Gastrocnemius medialis (tissue), 4 donors: ENCODE measurements at regions of chr5 and their contacts with region 1.

Region 1: DNA sequence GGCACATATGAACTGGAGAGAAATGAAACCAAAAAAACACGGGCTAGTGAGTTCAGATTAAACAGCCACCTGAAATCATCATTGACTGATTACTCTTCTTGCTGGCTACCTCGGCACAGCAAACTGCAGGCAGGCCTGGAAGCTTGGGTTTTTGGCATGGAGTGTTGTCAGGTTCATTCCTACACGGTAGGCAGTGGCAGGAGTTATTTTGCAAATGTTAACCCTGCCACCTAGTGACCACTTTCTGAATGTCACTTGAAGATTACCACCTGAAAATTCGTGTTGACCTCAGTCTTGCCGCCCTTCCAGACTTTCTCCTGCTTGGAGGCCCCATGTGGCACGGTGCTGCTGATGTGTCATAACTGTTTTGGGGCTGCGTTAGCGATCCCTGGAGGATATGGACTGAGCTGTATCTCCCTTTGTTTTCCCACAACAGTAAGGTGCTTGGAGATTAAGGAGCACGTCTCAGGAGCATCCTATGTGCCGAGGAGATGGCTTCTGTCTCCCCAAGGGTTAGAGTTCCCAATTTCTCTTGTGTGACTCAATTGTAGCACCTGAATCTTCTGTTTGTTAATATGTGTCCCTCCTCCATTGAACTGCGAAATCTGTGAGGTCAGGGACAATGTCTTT is 12.7 kb upstream of the CD180 start:
- DNase-seq: peak; percentile 51 to 58
- ATAC-seq: peak; percentile 71 to 93
- H3K4me3 ChIP-seq: no peak overlapping the region
- H3K27ac ChIP-seq: no peak overlapping the region
- H3K4me1 ChIP-seq: no peaks in the 10 kb centered on the region
- H3K27me3 ChIP-seq: no peaks in the 10 kb centered on the region
- CTCF ChIP-seq: peak; percentile 65 to 82 (median 78)
- POLR2A ChIP-seq: no peak

Region 2: DNA sequence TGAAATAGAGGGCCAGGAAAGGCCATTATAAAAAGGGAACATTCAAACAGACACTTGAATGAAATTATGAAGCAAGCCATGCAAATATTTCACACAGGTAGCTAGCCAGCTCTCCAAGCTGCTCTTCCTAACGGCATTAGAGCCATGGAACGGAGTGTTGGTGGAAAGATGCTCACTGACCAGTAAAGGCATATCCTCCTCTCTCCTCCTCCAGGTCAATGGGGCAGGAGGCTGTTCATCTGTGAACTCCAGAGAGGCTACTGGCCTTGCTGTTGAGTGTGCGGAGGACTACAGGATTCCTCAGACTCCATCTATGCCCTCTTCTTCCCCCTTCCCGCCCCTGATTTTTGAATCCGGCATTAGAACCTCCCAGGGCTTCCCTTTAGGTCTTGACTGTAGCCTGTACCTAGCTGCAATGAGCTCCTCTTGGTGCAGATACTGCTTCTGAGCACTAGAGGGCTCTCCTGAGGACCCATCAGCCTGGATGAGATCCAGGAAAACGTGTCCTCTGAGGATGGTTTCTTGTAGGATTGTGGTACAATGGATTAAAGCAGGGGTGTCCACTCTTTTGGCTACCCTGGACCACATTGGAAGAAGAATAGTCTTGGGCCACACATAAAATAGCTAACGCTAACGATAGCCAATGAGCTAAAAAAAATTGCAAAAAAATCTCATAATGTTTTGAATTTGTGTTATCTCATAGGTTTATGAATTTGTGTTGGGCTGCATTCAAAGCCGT is 903.0 kb before region 1 on chr5:
- in situ Hi-C with region 1: loop called in 2 of 4 experiments (anchors 25 kb)
- intact Hi-C with region 1: loop called (anchors 2 kb)
- DNase-seq: peak in 1 of 2 donors; percentile 24
- ATAC-seq: peak; percentile 45 to 68
- H3K4me3 ChIP-seq: no peak overlapping the region
- H3K27ac ChIP-seq: no peak overlapping the region
- H3K4me1 ChIP-seq: peaks cover 0 to 14% of the 10 kb centered on the region in 2 donors
- H3K27me3 ChIP-seq: no peaks in the 10 kb centered on the region
- CTCF ChIP-seq: peak; percentile 24 to 71 (median 56)
- POLR2A ChIP-seq: no peak

Region 3: DNA sequence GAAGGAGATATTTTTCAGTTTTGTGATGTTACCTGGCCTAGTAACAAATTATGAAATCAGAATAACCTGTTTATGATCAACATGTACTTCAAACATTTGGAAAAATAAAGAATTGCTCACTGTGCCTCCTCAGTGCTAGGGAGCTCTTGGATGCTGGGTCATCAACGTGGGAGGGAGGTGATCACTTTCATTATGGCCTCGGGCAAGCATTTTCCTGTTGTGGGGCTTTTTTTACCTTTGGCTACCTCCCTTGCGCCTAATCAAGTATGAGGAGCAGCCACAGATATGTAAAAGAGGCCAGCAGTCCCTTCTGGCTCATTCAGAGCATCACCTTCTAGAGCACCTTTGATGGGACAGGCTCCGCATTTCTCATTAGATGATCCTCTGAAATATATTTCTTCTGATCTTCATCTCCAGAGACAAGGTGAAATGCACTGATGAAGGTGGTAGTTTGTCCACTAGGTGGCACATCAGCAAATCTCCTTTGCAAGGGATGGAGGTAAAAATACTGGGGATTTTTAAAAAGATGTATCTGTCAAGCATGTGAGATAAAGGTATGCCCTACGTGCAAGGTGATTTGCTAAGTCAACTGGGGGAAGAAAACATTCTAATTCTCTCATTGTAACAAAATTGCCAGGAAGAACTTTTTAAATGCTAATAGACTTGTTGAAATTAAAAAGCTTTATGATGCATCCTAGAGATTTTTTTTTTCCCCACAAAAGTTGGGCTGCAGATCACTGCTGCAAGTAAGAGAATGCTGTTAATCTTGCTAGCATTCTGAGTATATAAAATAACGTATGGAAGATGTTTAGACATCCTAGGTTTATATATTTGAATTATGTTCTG is 394.9 kb before region 1 on chr5:
- in situ Hi-C with region 1: loop called in 3 of 4 experiments (anchors 10 kb)
- intact Hi-C with region 1: loop called (anchors 1 kb)
- DNase-seq: no peak
- ATAC-seq: peak in 1 of 2 donors; percentile 33
- H3K4me3 ChIP-seq: no peak overlapping the region
- H3K27ac ChIP-seq: no peak overlapping the region
- H3K4me1 ChIP-seq: no peaks in the 10 kb centered on the region
- H3K27me3 ChIP-seq: no peaks in the 10 kb centered on the region
- CTCF ChIP-seq: peak; percentile 30 to 68 (median 48)
- POLR2A ChIP-seq: no peak

Region 4: DNA sequence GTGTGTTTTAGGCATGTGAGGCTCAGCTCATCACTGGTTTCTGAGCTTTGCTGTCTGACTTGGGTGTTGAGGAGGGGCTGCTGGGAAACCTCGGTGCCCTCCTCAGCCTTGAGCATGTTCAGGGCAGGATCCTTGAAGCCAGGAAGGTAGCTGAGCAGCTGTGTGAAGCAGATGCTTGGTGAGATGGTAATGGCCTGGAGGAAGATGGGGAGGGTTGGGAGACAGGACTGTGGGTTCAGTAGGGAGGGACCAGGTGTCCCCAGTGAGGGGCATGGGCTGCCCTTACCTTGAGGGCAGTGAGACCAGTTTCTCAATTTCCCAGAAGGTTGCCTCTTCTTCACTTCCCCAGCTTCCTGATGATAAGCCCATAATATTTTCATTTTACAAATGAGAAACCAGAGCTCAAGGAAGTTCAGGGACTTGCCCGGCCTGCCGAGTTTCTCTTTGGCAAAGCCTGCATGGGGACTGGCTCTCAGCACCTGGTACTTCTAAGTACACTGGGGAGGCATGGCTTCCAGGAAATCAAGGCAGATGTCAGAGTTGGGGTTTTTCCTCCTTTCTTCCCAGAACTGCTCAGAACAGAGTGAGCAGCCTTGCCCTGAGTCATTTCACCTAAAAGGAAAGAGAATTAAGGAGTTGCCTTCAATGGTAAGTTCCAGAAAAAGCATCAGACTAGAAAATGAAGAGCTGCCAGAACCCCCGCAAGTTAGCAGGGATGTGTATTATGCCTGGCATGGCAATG is 387.4 kb before region 1 on chr5:
- in situ Hi-C with region 1: loop called (anchors 5 to 10 kb)
- intact Hi-C with region 1: no loop called
- DNase-seq: no peak
- ATAC-seq: no peak
- H3K4me3 ChIP-seq: no peak overlapping the region
- H3K27ac ChIP-seq: no peak overlapping the region
- H3K4me1 ChIP-seq: no peaks in the 10 kb centered on the region
- H3K27me3 ChIP-seq: no peaks in the 10 kb centered on the region
- CTCF ChIP-seq: no peak
- POLR2A ChIP-seq: no peak

Region 5: DNA sequence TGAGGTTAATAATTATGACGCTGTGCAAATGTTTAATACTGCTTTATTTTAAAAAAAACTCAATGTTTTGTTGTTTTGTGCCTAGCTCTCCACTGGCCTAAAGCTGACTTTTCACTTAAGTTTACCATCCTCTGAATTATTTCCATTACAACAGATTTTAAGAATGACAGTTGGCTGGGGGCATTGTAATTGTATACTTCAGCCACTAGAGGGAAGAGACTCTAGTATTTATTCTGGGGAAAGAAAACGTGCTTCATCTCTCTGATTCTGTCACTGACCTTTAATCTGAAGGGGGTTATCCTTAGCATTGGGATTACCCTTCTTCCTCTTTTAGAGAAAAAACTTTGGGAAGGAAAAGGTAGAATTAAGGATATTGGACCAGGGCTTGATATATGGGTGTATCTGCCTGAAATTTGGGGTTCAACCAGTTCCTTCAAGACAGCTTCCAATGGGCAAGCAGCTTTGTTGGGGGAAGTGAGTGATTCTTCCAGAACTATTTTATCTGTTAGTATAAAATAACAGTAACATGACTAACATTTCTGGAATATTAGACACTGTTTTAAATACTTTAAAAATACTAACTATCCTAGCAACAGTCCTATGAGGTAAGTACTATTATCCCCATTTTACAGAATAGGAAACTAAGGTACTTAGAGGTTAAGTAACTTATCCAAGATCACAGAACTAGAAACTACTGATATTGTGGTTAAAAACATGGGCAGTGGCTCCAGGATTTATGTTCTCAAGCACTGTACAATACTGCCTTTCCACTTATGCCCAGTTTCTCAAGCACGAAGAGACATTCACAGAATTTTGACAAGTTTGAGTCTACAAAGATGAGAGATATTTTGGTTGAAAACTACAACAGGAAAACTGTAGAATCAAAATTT is 221.1 kb before region 1 on chr5:
- in situ Hi-C with region 1: loop called in 2 of 4 experiments (anchors 10 kb)
- intact Hi-C with region 1: loop called (anchors 1 kb)
- DNase-seq: no peak
- ATAC-seq: peak; percentile 49 to 51
- H3K4me3 ChIP-seq: no peak overlapping the region
- H3K27ac ChIP-seq: no peak overlapping the region
- H3K4me1 ChIP-seq: peaks cover 0 to 4% of the 10 kb centered on the region in 2 donors
- H3K27me3 ChIP-seq: no peaks in the 10 kb centered on the region
- CTCF ChIP-seq: peak; percentile 68 to 87 (median 78)
- POLR2A ChIP-seq: no peak

Region 6: GRCh38 chr5:67156976-67157583 is 52.2 kb before region 1 on chr5:
- in situ Hi-C with region 1: loop called in 2 of 4 experiments (anchors 5 to 10 kb)
- intact Hi-C with region 1: loop called (anchors 1 kb)
- DNase-seq: no peak
- ATAC-seq: no peak
- H3K4me3 ChIP-seq: no peak overlapping the region
- H3K27ac ChIP-seq: no peak overlapping the region
- H3K4me1 ChIP-seq: peaks cover 17 to 19% of the 10 kb centered on the region in 2 donors
- H3K27me3 ChIP-seq: no peaks in the 10 kb centered on the region
- CTCF ChIP-seq: peak; percentile 66 to 75 (median 69)
- POLR2A ChIP-seq: no peak

Region 7: GRCh38 chr5:67165526-67166459 is 43.5 kb before region 1 on chr5:
- in situ Hi-C with region 1: loop called in 2 of 4 experiments (anchors 5 to 10 kb)
- intact Hi-C with region 1: loop called (anchors 2 kb)
- DNase-seq: peak; percentile 44 to 72
- ATAC-seq: peak; percentile 63 to 79
- H3K4me3 ChIP-seq: peak overlapping the region; percentile 8 to 46 (median 18)
- H3K27ac ChIP-seq: peak overlapping the region; percentile 53 to 75 (median 57)
- H3K4me1 ChIP-seq: no peaks in the 10 kb centered on the region
- H3K27me3 ChIP-seq: no peaks in the 10 kb centered on the region
- CTCF ChIP-seq: peak; percentile 28 to 60 (median 56)
- POLR2A ChIP-seq: no peak